Panc1 (cell line): ENCODE measurements at regions of chr19 and their contacts with region 1.

Region 1: GRCh38 chr19:9507285-9507684 is 8.9 kb upstream of the ZNF560 start:
- DNase-seq: no peak
- ATAC-seq: no peak
- H3K4me3 ChIP-seq: no peak overlapping the region
- H3K27ac ChIP-seq: no peak overlapping the region
- H3K4me1 ChIP-seq: no peaks in the 10 kb centered on the region
- H3K27me3 ChIP-seq: no peaks in the 10 kb centered on the region
- CTCF ChIP-seq: no peak

Region 2: GRCh38 chr19:9289231-9289884 is 217.9 kb before region 1 on chr19:
- CTCF ChIA-PET with region 1: no interaction called
- POLR2A ChIA-PET with region 1: interaction called, 10 read pairs
- in situ Hi-C with region 1: no loop called
- intact Hi-C with region 1: no loop called
- DNase-seq: no peak
- ATAC-seq: no peak
- H3K4me3 ChIP-seq: no peak overlapping the region
- H3K27ac ChIP-seq: no peak overlapping the region
- H3K4me1 ChIP-seq: no peaks in the 10 kb centered on the region
- H3K27me3 ChIP-seq: no peaks in the 10 kb centered on the region
- CTCF ChIP-seq: no peak

Region 3: GRCh38 chr19:9487016-9487415 is 20.3 kb before region 1 on chr19:
- CTCF ChIA-PET with region 1: no interaction called
- POLR2A ChIA-PET with region 1: no interaction called
- in situ Hi-C with region 1: no loop called
- intact Hi-C with region 1: no loop called
- DNase-seq: no peak
- ATAC-seq: no peak
- H3K4me3 ChIP-seq: no peak overlapping the region
- H3K27ac ChIP-seq: no peak overlapping the region
- H3K4me1 ChIP-seq: no peaks in the 10 kb centered on the region
- H3K27me3 ChIP-seq: no peaks in the 10 kb centered on the region
- CTCF ChIP-seq: no peak